Natural killer cell (primary cell): ENCODE measurements at regions of chrX and their contacts with region 1.

Region 1: DNA sequence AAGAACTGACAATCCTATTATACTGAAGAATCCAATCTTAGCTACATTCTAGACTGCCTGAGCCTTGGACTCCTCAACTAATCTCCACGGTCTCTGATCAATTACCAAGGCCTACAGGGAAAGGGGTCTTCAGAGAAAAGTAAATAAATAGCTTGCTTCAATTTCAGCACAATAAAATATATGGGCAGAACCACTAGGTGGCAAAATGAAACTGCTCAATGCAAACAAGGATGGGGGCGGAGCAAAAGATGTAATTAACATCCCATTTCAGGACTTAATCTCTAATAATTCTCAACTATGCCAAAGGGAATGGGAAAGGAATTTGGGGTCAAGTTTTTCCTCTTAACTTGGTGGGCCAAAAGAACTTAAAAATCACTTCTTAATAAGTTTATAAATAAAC is 78.4 kb upstream of the MAP3K15 start:
- DNase-seq: peak in 1 of 2 donors; percentile 67
- ATAC-seq: peak in 2 of 3 donors; percentile 38 to 60
- H3K4me3 ChIP-seq: no peak overlapping the region
- H3K4me3 Mint-ChIP-seq: no peak overlapping the region
- H3K27ac ChIP-seq: no peak overlapping the region
- H3K27ac Mint-ChIP-seq: peak overlapping the region; percentile 29 to 64
- H3K4me1 ChIP-seq: no peaks in the 10 kb centered on the region
- H3K4me1 Mint-ChIP-seq: peaks cover 18 to 29% of the 10 kb centered on the region in 2 donors
- H3K27me3 ChIP-seq: no peaks in the 10 kb centered on the region
- H3K27me3 Mint-ChIP-seq: no peaks in the 10 kb centered on the region
- CTCF ChIP-seq: peak; percentile 19

Region 2: DNA sequence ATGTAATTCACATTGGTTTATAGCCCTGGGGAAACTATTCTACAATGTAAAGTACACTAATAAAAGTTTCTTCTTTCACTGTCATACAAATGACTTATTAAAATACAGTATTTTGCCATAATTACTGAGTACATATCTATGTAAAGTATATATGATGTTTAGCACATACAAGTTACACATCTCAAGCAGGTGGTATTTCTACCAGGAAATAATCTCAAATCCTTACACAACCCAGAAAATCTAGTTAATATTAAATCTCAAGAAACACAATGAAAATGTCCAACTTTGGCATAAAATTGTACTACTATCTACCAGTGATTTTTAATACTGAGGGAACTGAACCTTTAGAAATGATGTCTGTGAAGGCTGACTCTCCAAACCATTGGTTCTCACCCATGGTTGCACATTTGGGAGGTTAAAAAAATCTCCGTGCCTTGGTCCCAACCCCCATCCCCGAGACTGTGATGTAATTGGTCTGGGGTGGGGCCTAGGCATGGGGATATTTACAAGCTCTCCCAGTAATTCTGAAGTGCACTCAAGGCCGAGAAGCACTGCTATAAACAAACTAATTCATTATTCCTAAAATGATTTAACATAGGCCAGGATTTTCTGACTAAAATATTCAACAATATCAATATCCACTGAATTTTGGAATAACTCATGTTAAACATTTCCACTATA is 106.0 kb before region 1 on chrX:
- intact Hi-C with region 1: no loop called
- DNase-seq: no peak
- ATAC-seq: no peak
- H3K4me3 ChIP-seq: no peak overlapping the region
- H3K4me3 Mint-ChIP-seq: no peak overlapping the region
- H3K27ac ChIP-seq: no peak overlapping the region
- H3K27ac Mint-ChIP-seq: no peak overlapping the region
- H3K4me1 ChIP-seq: no peaks in the 10 kb centered on the region
- H3K4me1 Mint-ChIP-seq: peaks cover 0 to 10% of the 10 kb centered on the region in 2 donors
- H3K27me3 ChIP-seq: no peaks in the 10 kb centered on the region
- H3K27me3 Mint-ChIP-seq: no peaks in the 10 kb centered on the region
- CTCF ChIP-seq: no peak

Region 3: DNA sequence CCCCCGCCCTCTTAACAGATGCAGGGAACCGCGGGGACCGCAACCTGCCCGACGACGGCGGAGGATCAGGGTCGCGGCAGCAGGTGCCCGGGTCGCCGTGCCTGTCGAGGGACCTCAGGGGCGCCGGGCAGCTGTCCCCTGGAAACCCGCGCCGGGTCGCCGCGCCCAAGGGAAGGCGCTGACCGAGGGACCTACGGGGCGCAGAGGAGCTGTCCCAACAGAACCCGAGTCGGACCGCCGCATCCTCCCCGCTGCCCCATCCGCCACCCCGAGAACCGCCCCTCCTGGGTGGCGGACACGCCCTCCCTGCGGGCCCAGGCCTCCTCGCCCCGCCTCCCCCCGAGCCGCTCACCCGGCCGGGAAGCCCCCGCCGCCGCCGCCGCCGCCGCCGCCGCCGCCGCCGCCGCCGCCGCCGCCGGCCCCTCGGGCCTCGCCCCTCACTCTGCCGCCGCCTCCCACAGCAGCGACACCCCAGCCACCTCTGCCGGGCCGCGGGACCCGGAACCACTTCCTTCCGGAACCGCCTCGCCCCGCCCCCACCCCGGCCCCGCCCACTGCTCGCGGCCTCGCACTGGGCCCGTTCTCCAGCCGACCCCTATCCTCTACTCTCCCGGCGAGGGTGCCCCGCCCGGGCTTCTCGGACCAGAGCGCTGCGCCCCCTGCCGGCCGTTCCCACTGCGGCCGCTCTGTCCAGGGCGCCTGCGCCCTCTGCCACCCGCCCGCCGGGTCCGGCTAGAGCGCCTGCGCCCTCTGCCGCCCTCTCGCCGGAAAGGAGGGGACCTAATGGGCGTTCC is 397.1 kb after region 1 on chrX and contains the start of gene BCLAF3:
- intact Hi-C with region 1: loop called (anchors 5 kb)
- DNase-seq: peak; percentile 85 to 89
- ATAC-seq: peak; percentile 87 to 97 (median 88)
- H3K4me3 ChIP-seq: peak within 1 kb of the TSS; percentile 67
- H3K4me3 Mint-ChIP-seq: peak within 1 kb of the TSS; percentile 88
- H3K27ac ChIP-seq: peak within 1 kb of the TSS; percentile 86
- H3K27ac Mint-ChIP-seq: peak within 1 kb of the TSS; percentile 81 to 91
- H3K4me1 ChIP-seq: peaks cover 6% of the 10 kb centered on the region
- H3K4me1 Mint-ChIP-seq: peaks cover 15 to 19% of the 10 kb centered on the region in 2 donors
- H3K27me3 ChIP-seq: no peaks in the 10 kb centered on the region
- H3K27me3 Mint-ChIP-seq: no peaks in the 10 kb centered on the region
- CTCF ChIP-seq: peak; percentile 58
- total RNA-seq, gene BCLAF3: 16.5 to 20.8 (median 20.1) TPM